ENCODE measurements at regions of chr17 and their contacts with region 1.

Region 1: GRCh38 chr17:55717898-55718735 is 4.5 kb downstream of the TMEM100 start:
- DNase-seq: peak; percentile 85
- ATAC-seq: peak; percentile 66

Region 2: GRCh38 chr17:55635253-55635914 is 82.7 kb before region 1 on chr17:
- intact Hi-C with region 1: loop called (anchors 5 kb)
- DNase-seq: no peak
- ATAC-seq: peak; percentile 64

Measured in Right ventricle myocardium superior (tissue), 1 donor.